ENCODE measurements at regions of chr1 and their contacts with region 1.

Region 1: DNA sequence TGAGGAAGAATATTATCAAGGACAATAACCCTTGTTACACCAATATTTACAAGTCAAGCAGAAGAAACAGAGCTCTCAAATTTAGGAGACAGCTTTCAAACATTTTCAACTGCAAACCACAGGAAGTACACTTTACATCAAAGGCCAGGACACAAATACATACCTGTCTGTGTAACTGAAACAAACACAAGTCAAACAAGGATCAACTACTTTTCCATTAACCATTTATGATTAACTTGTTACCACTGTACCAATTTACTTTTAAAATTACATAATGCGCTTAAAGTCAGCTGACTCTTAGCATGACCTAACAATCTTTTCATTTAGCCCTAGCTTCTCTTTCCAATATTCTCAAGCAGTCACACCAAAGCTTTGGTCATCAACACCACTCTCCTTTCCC is 43.5 kb downstream of the TRIM33 start:
- DNase-seq: no peak
- ATAC-seq: no peak
- H3K4me3 ChIP-seq: no peak overlapping the region
- H3K27ac ChIP-seq: no peak overlapping the region
- H3K4me1 ChIP-seq: no peaks in the 10 kb centered on the region
- H3K27me3 ChIP-seq: no peaks in the 10 kb centered on the region
- CTCF ChIP-seq: no peak
- POLR2A ChIP-seq: no peak
- RAD21 ChIP-seq: no peak

Region 2: DNA sequence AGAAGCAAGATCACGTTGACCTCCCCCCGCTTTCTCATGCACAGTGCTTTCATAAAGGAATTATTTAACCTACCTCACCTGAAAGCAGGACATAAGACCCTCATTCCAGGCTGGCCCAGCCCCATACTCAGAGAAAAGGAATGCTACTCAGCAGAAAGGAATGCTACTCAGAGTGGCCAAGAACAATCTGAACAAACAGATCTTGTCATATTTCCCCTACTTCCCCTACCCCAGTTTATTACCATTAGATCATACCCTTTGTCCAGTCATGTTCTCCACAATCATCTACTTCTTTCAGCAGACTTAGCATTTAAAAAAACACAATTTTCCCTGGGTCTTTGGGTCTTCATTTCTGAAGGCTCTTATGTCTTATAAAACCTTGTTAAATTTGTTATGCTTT is 1601.3 kb before region 1 on chr1:
- CTCF ChIA-PET with region 1: interaction called, 10 read pairs
- POLR2A ChIA-PET with region 1: no interaction called
- dilution Hi-C with region 1: no loop called
- in situ Hi-C with region 1: no loop called
- intact Hi-C with region 1: no loop called
- DNase-seq: peak; percentile 82
- ATAC-seq: peak; percentile 87
- H3K4me3 ChIP-seq: no peak overlapping the region
- H3K27ac ChIP-seq: no peak overlapping the region
- H3K4me1 ChIP-seq: peaks cover 3% of the 10 kb centered on the region; the same call in 1 of the 2 replicates
- H3K27me3 ChIP-seq: no peaks in the 10 kb centered on the region
- CTCF ChIP-seq: no peak
- POLR2A ChIP-seq: no peak
- RAD21 ChIP-seq: no peak

Region 3: GRCh38 chr1:114274621-114275317 is 192.7 kb before region 1 on chr1:
- CTCF ChIA-PET with region 1: no interaction called
- POLR2A ChIA-PET with region 1: no interaction called
- dilution Hi-C with region 1: no loop called
- in situ Hi-C with region 1: no loop called
- intact Hi-C with region 1: no loop called
- DNase-seq: no peak
- ATAC-seq: no peak
- H3K4me3 ChIP-seq: no peak overlapping the region
- H3K27ac ChIP-seq: no peak overlapping the region
- H3K4me1 ChIP-seq: no peaks in the 10 kb centered on the region
- H3K27me3 ChIP-seq: peaks cover 27% of the 10 kb centered on the region
- CTCF ChIP-seq: no peak
- POLR2A ChIP-seq: no peak
- RAD21 ChIP-seq: no peak

Region 4: DNA sequence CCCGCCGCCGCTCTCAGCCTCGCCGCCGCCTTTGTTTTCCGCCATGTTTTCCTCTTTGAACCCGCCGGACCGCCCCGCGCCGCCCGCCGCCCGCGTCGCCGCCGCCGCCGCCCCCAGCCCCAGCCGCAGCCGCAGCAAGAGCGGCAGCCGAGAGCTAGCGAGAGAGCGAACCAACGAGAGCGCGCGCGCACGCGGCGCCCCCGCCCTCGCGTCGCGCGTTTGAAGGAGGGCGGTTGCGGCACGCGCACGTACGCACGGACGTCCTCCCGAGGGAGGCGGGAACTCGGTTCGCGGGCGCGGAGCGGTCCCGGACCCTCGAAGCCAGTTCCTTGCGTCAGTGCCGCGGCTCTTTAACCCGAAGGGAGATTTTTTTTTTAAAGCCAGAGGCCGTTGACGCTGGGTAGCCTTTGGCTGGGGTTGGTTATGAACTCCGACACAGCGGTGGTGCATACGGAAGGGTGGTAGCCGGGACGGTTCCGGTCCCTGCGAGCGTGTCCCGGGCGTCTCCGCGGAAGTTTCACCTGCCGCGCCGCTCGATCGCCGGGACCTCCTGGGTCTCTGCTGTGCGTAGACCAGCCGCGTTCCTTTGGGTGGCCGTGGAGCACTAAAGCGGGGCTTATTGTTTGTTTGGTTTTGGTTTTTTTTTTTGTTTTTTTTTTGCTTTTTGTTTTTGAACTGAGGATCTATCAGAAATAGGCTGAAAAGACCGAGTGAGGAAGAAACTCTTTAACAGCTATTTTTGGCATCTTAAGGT is 43.7 kb after region 1 on chr1 and contains the start of gene TRIM33:
- CTCF ChIA-PET with region 1: interaction called, 4 read pairs
- POLR2A ChIA-PET with region 1: no interaction called
- dilution Hi-C with region 1: no loop called
- in situ Hi-C with region 1: no loop called
- intact Hi-C with region 1: loop called (anchors 5 kb)
- DNase-seq: peak; percentile 94
- ATAC-seq: peak; percentile 92
- H3K4me3 ChIP-seq: peak within 1 kb of the TSS; percentile 82
- H3K27ac ChIP-seq: peak within 1 kb of the TSS; percentile 78
- H3K4me1 ChIP-seq: peaks cover 2% of the 10 kb centered on the region; the same call in 1 of the 2 replicates
- H3K27me3 ChIP-seq: no peaks in the 10 kb centered on the region
- CTCF ChIP-seq: no peak
- POLR2A ChIP-seq: peak; percentile 56; the same call in 1 of the 2 replicates
- RAD21 ChIP-seq: no peak
- total RNA-seq, gene TRIM33: 40.0 and 40.1 TPM in 2 replicates

Region 5: GRCh38 chr1:114716304-114717170 is 249.0 kb after region 1 on chr1 and contains the start of gene NRAS:
- CTCF ChIA-PET with region 1: no interaction called
- POLR2A ChIA-PET with region 1: no interaction called
- dilution Hi-C with region 1: no loop called
- in situ Hi-C with region 1: no loop called
- intact Hi-C with region 1: no loop called
- DNase-seq: peak; percentile 91
- ATAC-seq: peak; percentile 91
- H3K4me3 ChIP-seq: peak within 1 kb of the TSS; percentile 86
- H3K27ac ChIP-seq: peak within 1 kb of the TSS; percentile 96
- H3K4me1 ChIP-seq: no peaks in the 10 kb centered on the region
- H3K27me3 ChIP-seq: no peaks in the 10 kb centered on the region
- CTCF ChIP-seq: no peak
- POLR2A ChIP-seq: peak; percentile 74
- RAD21 ChIP-seq: no peak
- total RNA-seq, gene NRAS: 85.9 and 110 TPM in 2 replicates

Region 6: GRCh38 chr1:114737314-114737849 is 269.9 kb after region 1 on chr1:
- CTCF ChIA-PET with region 1: no interaction called
- POLR2A ChIA-PET with region 1: no interaction called
- dilution Hi-C with region 1: no loop called
- in situ Hi-C with region 1: no loop called
- intact Hi-C with region 1: no loop called
- DNase-seq: no peak
- ATAC-seq: no peak
- H3K4me3 ChIP-seq: no peak overlapping the region
- H3K27ac ChIP-seq: no peak overlapping the region
- H3K4me1 ChIP-seq: no peaks in the 10 kb centered on the region
- H3K27me3 ChIP-seq: no peaks in the 10 kb centered on the region
- CTCF ChIP-seq: no peak
- POLR2A ChIP-seq: no peak
- RAD21 ChIP-seq: no peak

Region 7: DNA sequence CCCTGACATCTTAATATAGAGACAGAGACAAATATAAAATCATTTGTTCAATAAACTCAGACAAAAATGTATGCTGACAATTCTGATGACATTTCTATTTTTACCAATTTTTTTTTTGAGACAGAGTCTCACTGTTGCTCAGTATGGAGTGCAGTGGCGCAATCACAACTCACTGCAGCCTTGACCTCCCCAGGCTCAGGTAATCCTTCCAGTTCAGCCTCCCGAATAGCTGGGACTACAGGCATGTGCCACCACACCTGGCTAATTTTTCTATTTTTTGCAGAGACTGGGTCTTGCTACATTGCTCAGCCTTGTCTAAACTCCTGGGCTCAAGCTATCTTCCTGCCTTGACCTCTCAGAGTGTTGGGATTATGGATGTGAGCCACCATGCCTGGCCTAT is 326.6 kb after region 1 on chr1:
- CTCF ChIA-PET with region 1: no interaction called
- POLR2A ChIA-PET with region 1: no interaction called
- dilution Hi-C with region 1: no loop called
- in situ Hi-C with region 1: no loop called
- intact Hi-C with region 1: no loop called
- DNase-seq: no peak
- ATAC-seq: no peak
- H3K4me3 ChIP-seq: no peak overlapping the region
- H3K27ac ChIP-seq: no peak overlapping the region
- H3K4me1 ChIP-seq: no peaks in the 10 kb centered on the region
- H3K27me3 ChIP-seq: peaks cover 4% of the 10 kb centered on the region
- CTCF ChIP-seq: no peak
- POLR2A ChIP-seq: no peak
- RAD21 ChIP-seq: no peak

Measured in IMR-90 (cell line).